ENCODE measurements at regions of chr17 and their contacts with region 1.

Region 1: GRCh38 chr17:48908047-48908843 is at the start of gene UBE2Z:
- DNase-seq: peak; percentile 83 to 89 (median 87)
- H3K4me3 ChIP-seq: peak within 1 kb of the TSS; percentile 63 to 65
- H3K4me3 Mint-ChIP-seq: peak within 1 kb of the TSS; percentile 91 to 98 (median 94)
- H3K27ac ChIP-seq: peak within 1 kb of the TSS; percentile 82
- H3K27ac Mint-ChIP-seq: peak within 1 kb of the TSS; percentile 96 to 99 (median 98)
- H3K4me1 ChIP-seq: peaks cover 50% of the 10 kb centered on the region
- H3K4me1 Mint-ChIP-seq: peaks cover 39 to 54% (median 46%) of the 10 kb centered on the region in 4 donors
- H3K27me3 ChIP-seq: no peaks in the 10 kb centered on the region
- H3K27me3 Mint-ChIP-seq: no peaks in the 10 kb centered on the region
- total RNA-seq, gene UBE2Z: 98.4 to 105 TPM

Region 2: GRCh38 chr17:48892940-48893645 is 15.2 kb before region 1 on chr17:
- CTCF ChIA-PET with region 1: interaction called, 18 read pairs
- POLR2A ChIA-PET with region 1: interaction called, 101 read pairs
- intact Hi-C with region 1: loop called (anchors 1 kb)
- DNase-seq: peak in 1 of 5 donors; percentile 7
- H3K4me3 ChIP-seq: peak overlapping the region; percentile 80 to 93
- H3K4me3 Mint-ChIP-seq: peak overlapping the region; percentile 86 to 97 (median 93)
- H3K27ac ChIP-seq: peak overlapping the region; percentile 69
- H3K27ac Mint-ChIP-seq: peak overlapping the region; percentile 90 to 98 (median 97)
- H3K4me1 ChIP-seq: peaks cover 22% of the 10 kb centered on the region
- H3K4me1 Mint-ChIP-seq: peaks cover 12 to 27% (median 19%) of the 10 kb centered on the region in 4 donors
- H3K27me3 ChIP-seq: no peaks in the 10 kb centered on the region
- H3K27me3 Mint-ChIP-seq: no peaks in the 10 kb centered on the region

Measured in CD4-positive, alpha-beta memory T cell (primary cell).